ENCODE measurements at regions of chr16 and their contacts with region 1.

Region 1: DNA sequence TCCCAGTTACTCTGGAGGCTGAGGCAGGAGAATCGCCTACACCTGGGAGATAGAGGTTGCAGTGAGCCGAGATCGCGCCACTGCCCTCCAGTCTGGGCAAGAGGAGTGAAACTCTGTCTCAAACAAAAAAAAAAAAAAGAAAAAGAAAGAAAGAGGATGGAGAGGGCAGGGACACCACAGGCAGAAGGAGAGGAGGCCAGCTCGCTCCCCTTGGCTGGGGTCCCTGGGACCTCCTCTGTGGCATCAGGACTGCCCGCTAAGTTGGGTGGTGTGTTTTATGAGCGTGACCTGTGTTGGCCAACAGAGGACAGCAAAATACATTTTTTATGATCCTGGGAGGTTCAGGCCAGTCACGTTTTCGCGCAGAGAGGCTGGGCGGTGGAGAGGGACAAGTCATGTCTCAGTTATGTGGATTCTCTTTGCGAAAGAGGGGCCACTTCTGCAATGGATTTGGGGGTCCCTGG is 229.6 kb downstream of the MRTFB start:
- DNase-seq: peak; percentile 70 to 71
- H3K4me3 ChIP-seq: peak overlapping the region; percentile 78
- H3K4me3 Mint-ChIP-seq: peak overlapping the region; percentile 75
- H3K27ac Mint-ChIP-seq: no peak overlapping the region
- H3K4me1 ChIP-seq: 0 out of 2 replicates have a peak, but pooled peaks cover 3% of the 10 kb centered on the region
- H3K4me1 Mint-ChIP-seq: no peaks in the 10 kb centered on the region
- H3K27me3 ChIP-seq: no peaks in the 10 kb centered on the region
- H3K27me3 Mint-ChIP-seq: no peaks in the 10 kb centered on the region
- CTCF ChIP-seq: peak; percentile 39 to 73

Region 2: DNA sequence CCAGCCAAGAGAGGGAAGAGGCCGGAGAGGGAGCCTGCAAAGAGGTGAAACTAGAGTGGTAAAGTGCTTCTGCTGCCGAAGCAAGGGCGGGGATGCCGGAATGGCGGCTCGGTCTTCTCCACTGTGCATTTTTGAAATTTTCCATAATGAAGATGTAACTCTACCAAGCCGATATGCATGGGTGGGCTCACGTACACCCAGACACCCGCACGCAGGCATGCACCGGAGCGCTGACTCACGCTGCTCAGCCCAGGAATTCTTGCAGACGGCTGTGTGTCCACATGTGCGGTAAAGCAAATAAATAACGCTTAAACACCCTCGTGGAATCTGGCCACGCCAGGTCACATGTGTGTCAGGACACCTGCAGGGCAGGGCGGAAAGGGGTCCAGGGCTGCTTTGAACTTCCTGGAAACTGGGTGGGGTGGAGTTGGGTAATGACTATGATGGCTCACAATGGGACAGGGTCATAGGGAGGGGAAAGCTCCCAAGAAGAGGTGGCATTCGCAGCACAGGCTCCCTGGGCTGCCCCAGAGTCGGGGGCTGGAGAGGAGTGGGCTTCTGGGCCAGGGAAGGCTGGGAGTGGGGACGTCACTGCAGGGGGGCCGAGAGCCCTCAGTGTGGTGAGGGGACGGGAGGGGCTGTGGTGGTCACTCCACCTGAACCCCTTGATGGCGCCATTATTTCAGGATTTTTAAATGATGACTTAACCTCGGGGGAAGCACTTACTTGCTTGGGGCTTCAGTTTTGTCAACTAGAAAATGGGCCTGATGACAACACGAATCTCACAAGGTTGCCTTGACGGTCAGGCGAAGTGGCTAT is 63.9 kb after region 1 on chr16:
- CTCF ChIA-PET with region 1: no interaction called
- POLR2A ChIA-PET with region 1: no interaction called
- intact Hi-C with region 1: loop called (anchors 2 kb)
- DNase-seq: peak; percentile 72 to 83
- H3K4me3 ChIP-seq: peak overlapping the region; percentile 27
- H3K4me3 Mint-ChIP-seq: peak overlapping the region; percentile 72
- H3K27ac Mint-ChIP-seq: peak overlapping the region; percentile 79
- H3K4me1 ChIP-seq: peaks cover 11% of the 10 kb centered on the region
- H3K4me1 Mint-ChIP-seq: peaks cover 9% of the 10 kb centered on the region
- H3K27me3 ChIP-seq: no peaks in the 10 kb centered on the region
- H3K27me3 Mint-ChIP-seq: no peaks in the 10 kb centered on the region
- CTCF ChIP-seq: no peak